Ascending aorta (tissue), 2 donors: ENCODE measurements at regions of chr16 and their contacts with region 1.

Region 1: GRCh38 chr16:69917739-69918138 is 33.4 kb upstream of the CLEC18A start:
- DNase-seq: peak in 1 of 2 donors; percentile 91
- H3K4me3 ChIP-seq: peak overlapping the region; percentile 37 to 52
- H3K27ac ChIP-seq: peak overlapping the region; percentile 96 to 97
- H3K4me1 ChIP-seq: peaks cover 20 to 56% of the 10 kb centered on the region in 2 donors
- H3K27me3 ChIP-seq: no peaks in the 10 kb centered on the region
- CTCF ChIP-seq: no peak

Region 2: GRCh38 chr16:69848637-69849545 is 68.8 kb before region 1 on chr16:
- intact Hi-C with region 1: loop called (anchors 2 kb)
- DNase-seq: peak; percentile 82 to 97
- H3K4me3 ChIP-seq: peak overlapping the region; percentile 20 to 29
- H3K27ac ChIP-seq: peak overlapping the region; percentile 78 to 82
- H3K4me1 ChIP-seq: peaks cover 6 to 20% of the 10 kb centered on the region in 2 donors
- H3K27me3 ChIP-seq: no peaks in the 10 kb centered on the region
- CTCF ChIP-seq: peak in 1 of 3 experiments; percentile 26

Region 3: GRCh38 chr16:69880640-69881133 is 37.1 kb before region 1 on chr16:
- intact Hi-C with region 1: loop called (anchors 5 kb)
- DNase-seq: no peak
- H3K4me3 ChIP-seq: no peak overlapping the region
- H3K27ac ChIP-seq: peak overlapping the region; percentile 53 to 69
- H3K4me1 ChIP-seq: peaks cover 0 to 13% of the 10 kb centered on the region in 2 donors
- H3K27me3 ChIP-seq: no peaks in the 10 kb centered on the region
- CTCF ChIP-seq: no peak

Region 4: GRCh38 chr16:69890114-69890891 is 27.4 kb before region 1 on chr16:
- intact Hi-C with region 1: loop called (anchors 2 kb)
- DNase-seq: peak; percentile 46 to 83
- H3K4me3 ChIP-seq: no peak overlapping the region
- H3K27ac ChIP-seq: peak overlapping the region; percentile 80 to 90
- H3K4me1 ChIP-seq: peaks cover 0 to 15% of the 10 kb centered on the region in 2 donors
- H3K27me3 ChIP-seq: no peaks in the 10 kb centered on the region
- CTCF ChIP-seq: no peak

Region 5: GRCh38 chr16:69937465-69937951 is 19.8 kb after region 1 on chr16:
- intact Hi-C with region 1: no loop called
- DNase-seq: no peak
- H3K4me3 ChIP-seq: no peak overlapping the region
- H3K27ac ChIP-seq: peak overlapping the region; percentile 96 to 97
- H3K4me1 ChIP-seq: peaks cover 14 to 32% of the 10 kb centered on the region in 2 donors
- H3K27me3 ChIP-seq: no peaks in the 10 kb centered on the region
- CTCF ChIP-seq: peak in 2 of 3 experiments; percentile 14 to 19